ENCODE measurements at regions of chr11 and their contacts with region 1.

Region 1: DNA sequence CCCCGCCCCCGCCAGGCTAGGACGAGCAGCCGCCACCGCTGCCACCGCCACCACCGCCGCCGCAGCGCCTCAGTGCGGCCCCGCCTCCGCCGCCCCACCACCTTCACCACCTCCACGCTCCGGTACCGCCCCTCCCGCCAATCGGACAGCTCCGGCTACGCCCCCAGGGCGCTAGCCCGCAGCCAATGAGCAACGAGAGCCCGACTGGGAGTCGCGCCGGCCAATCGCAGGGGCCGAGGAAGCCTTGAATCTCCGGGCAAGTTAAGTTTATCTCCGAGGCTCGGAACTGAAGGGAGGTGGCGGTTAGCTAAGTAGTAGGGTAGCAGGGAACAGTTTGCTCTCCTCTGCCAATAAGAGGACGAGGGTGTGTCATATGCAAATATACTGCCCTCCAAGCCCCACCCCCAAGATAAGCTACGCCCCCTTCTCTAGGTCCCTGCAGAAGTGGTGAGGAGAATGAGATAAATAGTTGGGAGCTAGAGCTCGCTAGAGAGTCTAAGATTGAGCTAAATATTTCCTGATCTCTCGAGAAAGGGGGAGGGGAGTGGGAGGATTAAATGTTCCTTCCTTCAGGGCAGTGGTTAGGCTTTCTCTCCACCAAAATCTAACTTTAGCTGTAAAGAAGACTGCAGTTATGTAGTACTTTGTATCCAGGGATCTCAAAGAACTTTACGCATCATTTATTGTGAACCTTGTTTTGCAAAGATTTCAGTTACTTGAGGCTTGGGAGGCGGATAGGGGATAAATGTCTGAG is at the start of gene SESN3:
- DNase-seq: peak; percentile 95 to 99 (median 98)
- ATAC-seq: peak; percentile 88
- H3K4me3 ChIP-seq: peak within 1 kb of the TSS; percentile 75 to 79
- H3K4me3 Mint-ChIP-seq: peak within 1 kb of the TSS; percentile 93
- H3K27ac ChIP-seq: peak within 1 kb of the TSS; percentile 61 to 76
- H3K27ac Mint-ChIP-seq: peak within 1 kb of the TSS; percentile 85
- H3K4me1 ChIP-seq: peaks cover 20% of the 10 kb centered on the region
- H3K4me1 Mint-ChIP-seq: peaks cover 59% of the 10 kb centered on the region
- H3K27me3 ChIP-seq: no peaks in the 10 kb centered on the region
- H3K27me3 Mint-ChIP-seq: no peaks in the 10 kb centered on the region
- CTCF ChIP-seq: no peak
- total RNA-seq, gene SESN3: 30.9 to 31.5 TPM

Region 2: GRCh38 chr11:95067039-95067840 is 164.1 kb before region 1 on chr11:
- CTCF ChIA-PET with region 1: interaction called, 4 read pairs
- POLR2A ChIA-PET with region 1: interaction called, 33 read pairs
- intact Hi-C with region 1: loop called (anchors 1 to 5 kb)
- DNase-seq: peak; percentile 45 to 88 (median 71)
- ATAC-seq: peak; percentile 61
- H3K4me3 ChIP-seq: peak overlapping the region; percentile 85 to 94
- H3K4me3 Mint-ChIP-seq: peak overlapping the region; percentile 96
- H3K27ac ChIP-seq: peak overlapping the region; percentile 90 to 92
- H3K27ac Mint-ChIP-seq: peak overlapping the region; percentile 97
- H3K4me1 ChIP-seq: peaks cover 23% of the 10 kb centered on the region
- H3K4me1 Mint-ChIP-seq: peaks cover 33% of the 10 kb centered on the region
- H3K27me3 ChIP-seq: no peaks in the 10 kb centered on the region
- H3K27me3 Mint-ChIP-seq: no peaks in the 10 kb centered on the region
- CTCF ChIP-seq: peak; percentile 46

Region 3: DNA sequence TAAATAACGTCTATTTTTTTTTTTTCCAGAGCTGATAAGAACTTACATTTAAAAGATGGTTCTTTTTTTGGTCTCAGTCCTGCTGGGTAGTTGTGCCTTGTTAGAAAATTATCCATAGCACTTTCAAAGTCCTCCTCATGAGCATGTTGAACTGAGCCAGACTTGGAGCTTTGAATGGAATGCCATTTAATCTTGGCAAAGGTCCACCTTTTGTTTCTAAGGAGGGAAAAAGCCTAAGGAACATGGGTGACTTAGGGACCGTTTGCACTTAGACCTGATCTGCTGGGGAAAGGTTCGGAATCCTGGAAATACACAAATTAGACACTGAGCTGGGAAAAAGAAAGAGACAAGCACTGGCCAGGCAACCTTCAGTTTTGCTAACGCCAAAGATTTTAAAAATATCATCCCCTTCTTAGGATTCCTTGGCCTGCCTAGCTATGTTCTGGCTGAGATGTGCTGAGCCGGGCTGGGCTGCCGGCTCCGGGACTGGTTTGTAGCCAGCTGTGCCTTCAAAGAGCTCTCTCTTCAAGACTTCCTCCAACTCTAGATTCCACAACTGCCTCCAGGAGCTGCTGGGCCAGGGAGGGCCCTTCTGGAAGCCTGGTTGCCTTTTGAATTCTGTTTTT is 74.3 kb before region 1 on chr11:
- CTCF ChIA-PET with region 1: interaction called, 14 read pairs
- POLR2A ChIA-PET with region 1: interaction called, 24 read pairs
- intact Hi-C with region 1: loop called in 1 of 2 experiments (anchors 2 kb)
- DNase-seq: no peak
- ATAC-seq: no peak
- H3K4me3 ChIP-seq: no peak overlapping the region
- H3K4me3 Mint-ChIP-seq: no peak overlapping the region
- H3K27ac ChIP-seq: peak overlapping the region in 1 of 2 experiments; percentile 57
- H3K27ac Mint-ChIP-seq: peak overlapping the region; percentile 30
- H3K4me1 ChIP-seq: peaks cover 27% of the 10 kb centered on the region
- H3K4me1 Mint-ChIP-seq: peaks cover 38% of the 10 kb centered on the region
- H3K27me3 ChIP-seq: no peaks in the 10 kb centered on the region
- H3K27me3 Mint-ChIP-seq: no peaks in the 10 kb centered on the region
- CTCF ChIP-seq: no peak

Region 4: DNA sequence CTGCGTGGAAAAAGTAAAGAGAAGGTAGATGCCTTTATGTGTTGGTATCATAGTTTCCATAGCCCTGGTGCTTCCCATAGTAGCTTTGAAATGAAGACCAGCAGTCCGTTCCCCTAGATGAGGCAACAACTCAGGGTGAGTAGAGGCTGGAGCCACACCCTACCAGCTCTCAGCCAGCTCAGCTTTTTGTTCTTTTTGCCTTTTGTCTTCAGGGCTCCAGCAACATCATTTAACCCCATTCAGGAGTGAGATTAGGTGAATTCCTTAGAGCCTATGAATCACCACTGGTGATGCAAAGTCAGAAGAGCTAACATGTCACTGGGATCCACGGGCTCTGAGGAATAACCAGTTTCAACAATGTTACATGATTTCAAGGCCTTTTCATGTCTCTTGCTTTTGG is 13.7 kb after region 1 on chr11:
- CTCF ChIA-PET with region 1: interaction called, 4 read pairs
- POLR2A ChIA-PET with region 1: interaction called, 10 read pairs
- intact Hi-C with region 1: no loop called
- DNase-seq: peak in 1 of 9 experiments; percentile 15
- ATAC-seq: no peak
- H3K4me3 ChIP-seq: no peak overlapping the region
- H3K4me3 Mint-ChIP-seq: no peak overlapping the region
- H3K27ac ChIP-seq: no peak overlapping the region
- H3K27ac Mint-ChIP-seq: no peak overlapping the region
- H3K4me1 ChIP-seq: no peaks in the 10 kb centered on the region
- H3K4me1 Mint-ChIP-seq: no peaks in the 10 kb centered on the region
- H3K27me3 ChIP-seq: no peaks in the 10 kb centered on the region
- H3K27me3 Mint-ChIP-seq: no peaks in the 10 kb centered on the region
- CTCF ChIP-seq: no peak

Region 5: GRCh38 chr11:95337175-95337957 is 106.1 kb after region 1 on chr11:
- CTCF ChIA-PET with region 1: no interaction called
- POLR2A ChIA-PET with region 1: no interaction called
- intact Hi-C with region 1: loop called in 1 of 2 experiments (anchors 2 kb)
- DNase-seq: peak in 8 of 9 experiments; percentile 1 to 63 (median 20)
- ATAC-seq: peak; percentile 55
- H3K4me3 ChIP-seq: peak overlapping the region in 1 of 2 experiments; percentile 16
- H3K4me3 Mint-ChIP-seq: no peak overlapping the region
- H3K27ac ChIP-seq: peak overlapping the region in 1 of 2 experiments; percentile 38
- H3K27ac Mint-ChIP-seq: no peak overlapping the region
- H3K4me1 ChIP-seq: no peaks in the 10 kb centered on the region
- H3K4me1 Mint-ChIP-seq: peaks cover 2% of the 10 kb centered on the region
- H3K27me3 ChIP-seq: no peaks in the 10 kb centered on the region
- H3K27me3 Mint-ChIP-seq: no peaks in the 10 kb centered on the region
- CTCF ChIP-seq: no peak

Region 6: GRCh38 chr11:95790123-95790932 is 559.0 kb after region 1 on chr11 and contains the start of gene CEP57:
- CTCF ChIA-PET with region 1: no interaction called
- POLR2A ChIA-PET with region 1: interaction called, 27 read pairs
- intact Hi-C with region 1: loop called (anchors 1 to 5 kb)
- DNase-seq: peak; percentile 80 to 98 (median 94)
- ATAC-seq: peak; percentile 54
- H3K4me3 ChIP-seq: peak within 1 kb of the TSS; percentile 86 to 93
- H3K4me3 Mint-ChIP-seq: peak within 1 kb of the TSS; percentile 99
- H3K27ac ChIP-seq: peak within 1 kb of the TSS; percentile 99 to 100
- H3K27ac Mint-ChIP-seq: peak within 1 kb of the TSS; percentile 100
- H3K4me1 ChIP-seq: peaks cover 29% of the 10 kb centered on the region
- H3K4me1 Mint-ChIP-seq: peaks cover 63% of the 10 kb centered on the region
- H3K27me3 ChIP-seq: no peaks in the 10 kb centered on the region
- H3K27me3 Mint-ChIP-seq: no peaks in the 10 kb centered on the region
- CTCF ChIP-seq: no peak
- total RNA-seq, gene CEP57: 53.2 to 53.7 TPM

Measured in CD8-positive, alpha-beta T cell (primary cell).